Mammary epithelial cell (primary cell): ENCODE measurements at regions of chr10 and their contacts with region 1.

Region 1: GRCh38 chr10:74011770-74012169 is 13.9 kb downstream of the VCL start:
- DNase-seq: peak; percentile 67
- H3K4me3 ChIP-seq: no peak overlapping the region
- H3K27ac ChIP-seq: no peak overlapping the region
- H3K4me1 ChIP-seq: peaks cover 28% of the 10 kb centered on the region
- H3K27me3 ChIP-seq: no peaks in the 10 kb centered on the region
- CTCF ChIP-seq: no peak

Region 2: GRCh38 chr10:73865459-73866442 is 146.0 kb before region 1 on chr10:
- CTCF ChIA-PET with region 1: no interaction called
- dilution Hi-C with region 1: loop called (anchors 5 kb)
- in situ Hi-C with region 1: no loop called
- intact Hi-C with region 1: no loop called
- DNase-seq: no peak
- H3K4me3 ChIP-seq: no peak overlapping the region
- H3K27ac ChIP-seq: no peak overlapping the region
- H3K4me1 ChIP-seq: no peaks in the 10 kb centered on the region
- H3K27me3 ChIP-seq: no peaks in the 10 kb centered on the region
- CTCF ChIP-seq: no peak

Region 3: DNA sequence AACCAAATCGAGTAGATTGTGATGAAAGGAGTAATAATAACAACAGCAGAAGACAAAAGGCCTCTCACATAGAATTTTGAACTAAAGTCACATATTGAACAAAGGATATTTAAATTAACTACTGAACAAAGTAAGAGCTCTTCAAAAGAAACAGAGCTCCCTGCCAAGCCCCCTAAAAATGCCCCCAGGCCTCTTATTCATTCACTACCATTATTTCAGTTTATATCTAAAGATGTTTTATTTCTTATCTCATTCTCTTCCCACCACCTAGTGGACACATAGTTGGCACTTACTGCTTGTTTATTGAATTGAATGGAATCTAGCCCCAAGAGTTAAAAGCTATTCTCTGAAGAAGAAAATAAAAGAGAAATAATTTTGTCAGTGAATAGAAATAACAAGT is 23.5 kb after region 1 on chr10:
- CTCF ChIA-PET with region 1: no interaction called
- dilution Hi-C with region 1: no loop called
- in situ Hi-C with region 1: no loop called
- intact Hi-C with region 1: no loop called
- DNase-seq: no peak
- H3K4me3 ChIP-seq: no peak overlapping the region
- H3K27ac ChIP-seq: no peak overlapping the region
- H3K4me1 ChIP-seq: no peaks in the 10 kb centered on the region
- H3K27me3 ChIP-seq: no peaks in the 10 kb centered on the region
- CTCF ChIP-seq: peak; percentile 27 to 43